Mammary epithelial cell (primary cell): ENCODE measurements at regions of chrX and their contacts with region 1.

Region 1: GRCh38 chrX:2679534-2680485 is 11.3 kb upstream of the CD99 start:
- DNase-seq: no peak
- H3K4me3 ChIP-seq: no peak overlapping the region
- H3K27ac ChIP-seq: no peak overlapping the region
- H3K4me1 ChIP-seq: peaks cover 6% of the 10 kb centered on the region
- H3K27me3 ChIP-seq: no peaks in the 10 kb centered on the region
- CTCF ChIP-seq: no peak

Region 2: GRCh38 chrX:2740672-2741071 is 60.9 kb after region 1 on chrX:
- CTCF ChIA-PET with region 1: no interaction called
- dilution Hi-C with region 1: loop called (anchors 5 kb)
- in situ Hi-C with region 1: no loop called
- intact Hi-C with region 1: no loop called
- DNase-seq: no peak
- H3K4me3 ChIP-seq: no peak overlapping the region
- H3K27ac ChIP-seq: no peak overlapping the region
- H3K4me1 ChIP-seq: no peaks in the 10 kb centered on the region
- H3K27me3 ChIP-seq: no peaks in the 10 kb centered on the region
- CTCF ChIP-seq: no peak